Activated CD8-positive, alpha-beta T cell treated with anti-CD3 and anti-CD28 coated beads for 36 hours (primary cell): ENCODE measurements at regions of chr1 and their contacts with region 1.

Region 1: DNA sequence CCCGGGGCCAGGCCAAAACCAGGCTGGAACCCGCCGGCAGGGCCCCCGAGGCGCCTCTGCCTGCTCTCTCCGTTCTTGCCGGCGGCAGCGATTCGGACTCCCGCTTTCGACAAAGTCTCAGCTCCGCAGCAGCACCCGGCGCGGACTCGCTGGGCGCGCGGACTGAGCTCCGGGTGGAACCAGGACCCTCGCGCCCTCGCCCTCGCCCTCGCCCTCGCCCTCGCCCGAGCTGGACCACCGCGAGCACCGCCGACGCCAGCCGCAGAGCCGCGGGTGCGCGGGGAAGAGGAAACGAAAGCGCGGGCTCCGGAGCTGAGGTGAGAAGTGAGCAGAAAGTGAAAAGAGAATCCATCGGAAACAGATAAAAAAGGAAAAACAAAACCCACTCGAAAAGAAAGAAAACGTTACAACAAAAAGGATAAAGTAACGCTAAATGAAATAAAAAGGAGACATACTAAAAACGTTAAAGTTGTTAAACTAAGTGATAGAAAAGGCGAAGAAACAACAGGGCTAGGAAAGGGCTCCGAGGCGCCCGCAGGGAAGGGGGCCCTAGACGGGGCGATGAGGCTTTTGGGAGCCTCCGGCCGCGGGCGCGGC is 64.9 kb downstream of the MEF2D start:
- DNase-seq: no peak
- ATAC-seq: no peak
- H3K4me3 Mint-ChIP-seq: peak overlapping the region; percentile 69
- H3K27ac Mint-ChIP-seq: peak overlapping the region; percentile 52
- H3K4me1 Mint-ChIP-seq: peaks cover 52% of the 10 kb centered on the region
- H3K27me3 Mint-ChIP-seq: peaks cover 79% of the 10 kb centered on the region
- CTCF ChIP-seq: no peak

Region 2: DNA sequence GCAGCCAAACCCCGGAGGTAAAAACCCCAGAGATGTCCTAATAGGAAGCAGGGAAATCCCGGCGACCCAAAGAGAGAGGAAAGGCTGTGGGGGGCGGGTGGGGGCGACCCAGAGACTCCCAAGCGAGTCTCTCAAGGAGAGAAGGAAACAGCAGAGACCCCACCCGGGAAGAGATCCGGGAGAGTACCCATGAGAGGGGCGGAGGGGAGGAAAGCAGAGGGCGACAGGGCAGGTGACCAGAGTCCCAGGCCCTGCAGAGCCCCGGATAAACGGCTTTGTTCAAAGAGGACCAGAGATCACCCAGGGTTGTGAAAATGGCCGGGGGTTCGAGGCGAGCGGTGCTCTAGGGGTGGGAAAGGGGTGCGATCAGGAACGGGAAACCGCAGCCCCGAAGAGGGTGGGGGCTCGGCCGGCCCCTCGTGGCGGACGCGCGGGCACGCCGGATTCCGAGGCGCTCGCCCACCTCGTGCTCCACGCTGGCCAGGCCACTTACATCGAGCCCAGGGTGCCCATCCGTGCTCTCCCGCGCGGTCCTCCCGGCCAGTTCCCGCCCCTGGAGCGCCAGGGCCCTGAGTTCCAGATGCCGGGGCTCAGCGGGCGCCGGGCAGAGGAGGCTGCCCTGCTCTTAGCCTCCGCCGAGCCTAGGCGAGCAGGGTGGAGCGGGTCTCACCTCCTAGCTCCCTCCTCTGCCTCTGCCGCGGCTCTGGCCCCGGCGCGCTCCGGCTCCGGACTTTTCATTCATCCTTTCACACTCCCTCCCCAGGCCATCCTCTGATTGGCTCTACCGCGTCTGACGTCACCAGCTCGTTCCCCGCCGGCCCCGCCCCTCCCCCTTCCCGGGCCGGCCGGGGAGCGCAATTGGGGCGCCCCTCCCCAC is 14.3 kb before region 1 on chr1:
- CTCF ChIA-PET with region 1: interaction called, 19 read pairs
- POLR2A ChIA-PET with region 1: interaction called, 7 read pairs
- intact Hi-C with region 1: no loop called
- DNase-seq: peak; percentile 85
- ATAC-seq: peak; percentile 88
- H3K4me3 Mint-ChIP-seq: peak overlapping the region; percentile 72
- H3K27ac Mint-ChIP-seq: no peak overlapping the region
- H3K4me1 Mint-ChIP-seq: peaks cover 18% of the 10 kb centered on the region
- H3K27me3 Mint-ChIP-seq: peaks cover 71% of the 10 kb centered on the region
- CTCF ChIP-seq: no peak